Calu3 (cell line): ENCODE measurements at regions of chr11 and their contacts with region 1.

Region 1: DNA sequence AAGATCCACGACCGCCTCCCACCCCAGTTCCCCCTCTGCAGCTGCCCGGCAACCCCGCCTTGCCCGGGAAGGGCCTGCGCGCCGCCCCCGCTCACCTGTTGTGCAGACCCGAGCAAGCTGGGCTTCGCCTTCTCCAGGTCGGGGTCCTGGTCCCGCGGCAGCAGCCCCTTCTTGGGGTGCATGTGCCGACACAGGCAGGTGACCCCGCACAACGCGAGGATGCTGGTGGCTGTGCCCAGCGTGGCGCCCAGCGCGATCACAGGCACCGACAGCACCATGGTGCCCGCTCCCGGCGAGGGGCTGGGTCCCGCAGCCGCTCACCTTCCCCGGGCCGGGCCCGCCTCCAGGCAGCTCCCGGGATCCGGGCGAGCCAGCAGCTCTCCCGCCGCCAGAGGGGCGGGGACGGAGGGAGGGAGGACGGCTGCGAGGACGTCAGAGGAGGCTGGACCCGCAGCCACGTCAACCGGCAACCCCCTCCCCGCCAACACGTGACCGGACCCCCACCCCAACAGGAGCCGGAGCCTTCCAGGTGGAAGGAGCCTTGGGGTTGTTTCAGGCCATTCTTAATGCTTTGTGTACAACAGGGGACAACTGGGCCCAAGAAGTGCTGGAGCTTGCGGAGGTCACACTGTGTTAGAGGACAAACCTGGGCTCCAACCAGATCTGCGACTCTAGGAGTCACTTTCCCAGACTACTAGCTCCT is at the start of gene SYT13:
- DNase-seq: peak; percentile 87
- H3K4me3 Mint-ChIP-seq: peak within 1 kb of the TSS; percentile 73
- H3K27ac Mint-ChIP-seq: peak within 1 kb of the TSS; percentile 34
- H3K4me1 Mint-ChIP-seq: peaks cover 32% of the 10 kb centered on the region
- H3K27me3 Mint-ChIP-seq: peaks cover 23% of the 10 kb centered on the region
- CTCF ChIP-seq: no peak
- total RNA-seq, gene SYT13: 31.1 and 36.8 TPM in 2 replicates

Region 2: DNA sequence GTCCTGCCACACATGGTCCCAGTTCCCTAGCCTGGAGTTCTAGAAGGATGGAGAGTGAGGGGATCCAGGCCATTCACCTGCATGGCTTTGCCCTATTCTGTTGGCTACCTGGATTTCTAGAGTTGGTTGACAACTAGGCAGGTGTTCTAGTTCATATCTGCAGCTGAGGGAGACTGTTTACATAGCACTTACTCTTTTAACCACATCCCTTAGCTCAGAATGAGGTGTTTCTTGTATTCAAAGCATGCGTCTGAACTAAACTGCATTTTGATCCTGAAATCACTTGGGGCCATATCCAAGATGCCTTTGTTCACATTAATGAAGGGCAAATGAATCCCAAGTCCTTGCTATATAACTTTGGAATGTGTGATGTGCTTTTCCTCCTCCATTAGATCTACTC is 60.8 kb before region 1 on chr11:
- CTCF ChIA-PET with region 1: no interaction called
- intact Hi-C with region 1: no loop called
- DNase-seq: no peak
- H3K4me3 Mint-ChIP-seq: no peak overlapping the region
- H3K27ac Mint-ChIP-seq: no peak overlapping the region
- H3K4me1 Mint-ChIP-seq: no peaks in the 10 kb centered on the region
- H3K27me3 Mint-ChIP-seq: no peaks in the 10 kb centered on the region
- CTCF ChIP-seq: no peak

Region 3: GRCh38 chr11:45272701-45273100 is 13.4 kb before region 1 on chr11:
- CTCF ChIA-PET with region 1: interaction called, 6 read pairs
- intact Hi-C with region 1: loop called (anchors 2 kb)
- DNase-seq: peak; percentile 21
- H3K4me3 Mint-ChIP-seq: peak overlapping the region; percentile 23
- H3K27ac Mint-ChIP-seq: peak overlapping the region; percentile 82
- H3K4me1 Mint-ChIP-seq: peaks cover 73% of the 10 kb centered on the region
- H3K27me3 Mint-ChIP-seq: no peaks in the 10 kb centered on the region
- CTCF ChIP-seq: no peak